Activated CD4-positive, alpha-beta memory T cell treated with anti-CD3 and anti-CD28 coated beads, Interleukin-2, amount 10 ng/mL, durations not matched to agents 7 days and 5 days (primary cell): ENCODE measurements at regions of chr15 and their contacts with region 1.

Region 1: DNA sequence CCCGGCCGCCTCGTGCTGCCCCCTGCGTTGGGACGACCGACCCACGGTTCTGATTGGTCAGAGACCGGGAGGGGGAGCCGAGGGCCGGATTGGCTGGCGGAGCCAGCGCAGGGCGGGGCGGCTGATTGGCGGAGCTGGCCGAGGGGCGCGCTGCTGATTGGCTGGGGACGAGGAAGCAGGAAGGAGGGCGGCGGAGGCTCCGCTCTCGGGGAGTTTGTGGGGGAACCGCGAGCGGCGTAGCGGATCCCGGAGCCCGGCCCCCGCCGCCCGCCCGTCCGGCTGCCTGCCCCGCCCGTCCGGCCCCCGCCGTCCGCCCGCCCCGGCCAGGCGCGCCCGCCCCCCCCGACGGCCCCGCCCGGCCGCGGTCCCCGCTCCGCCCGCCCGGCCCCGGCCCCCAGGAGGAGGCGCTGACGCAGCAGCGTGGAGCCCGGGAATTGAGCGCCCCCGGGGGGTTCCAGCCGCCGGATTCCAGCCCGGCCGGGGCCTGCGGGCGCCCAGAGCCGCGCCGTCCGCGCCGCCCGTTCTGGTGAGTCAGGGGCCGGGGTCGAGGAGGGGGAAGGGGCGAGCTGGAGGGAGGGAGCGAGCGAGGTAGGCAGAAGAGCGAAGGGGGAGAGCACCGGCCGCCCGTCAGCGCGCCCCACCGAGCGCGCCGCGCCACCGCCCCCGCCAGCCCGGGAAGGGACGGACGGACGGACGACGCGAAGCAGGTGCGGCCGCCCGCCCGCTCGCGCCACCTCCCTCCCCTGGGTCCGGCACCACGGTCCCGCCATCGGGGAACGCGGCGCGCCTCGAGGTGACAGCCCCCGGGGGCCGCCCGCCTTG is at the start of gene BAHD1:
- DNase-seq: peak; percentile 96
- H3K4me3 Mint-ChIP-seq: peak within 1 kb of the TSS; percentile 87
- H3K27ac Mint-ChIP-seq: peak within 1 kb of the TSS; percentile 49
- H3K4me1 Mint-ChIP-seq: peaks cover 45% of the 10 kb centered on the region
- H3K27me3 Mint-ChIP-seq: peaks cover 54% of the 10 kb centered on the region
- total RNA-seq, gene BAHD1: 26.0 to 27.0 TPM

Region 2: DNA sequence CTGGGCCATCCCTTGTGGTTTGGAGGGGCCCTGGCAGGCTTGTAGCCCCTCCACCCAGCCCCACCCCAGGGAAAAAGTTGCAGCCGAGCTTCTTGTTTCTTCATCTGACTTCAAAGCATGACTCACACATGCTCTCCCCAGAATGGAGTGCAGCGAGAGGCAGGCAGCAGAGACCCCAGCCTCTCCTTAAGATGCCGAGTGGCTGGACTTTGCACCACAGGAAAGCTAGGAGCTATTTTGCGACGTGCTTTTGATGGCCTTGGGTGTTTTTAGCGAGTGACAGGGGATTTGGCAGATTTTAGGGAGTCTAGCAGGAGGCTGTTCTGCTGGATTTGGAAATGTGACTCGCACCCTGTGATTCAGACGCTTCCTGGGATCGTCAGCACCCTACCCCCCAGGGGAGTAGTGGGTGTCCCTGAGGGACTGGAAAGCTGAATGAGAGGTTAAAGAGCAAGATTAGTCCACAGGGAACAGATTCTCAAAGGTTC is 14.0 kb after region 1 on chr15:
- CTCF ChIA-PET with region 1: interaction called, 16 read pairs
- POLR2A ChIA-PET with region 1: interaction called, 68 read pairs
- DNase-seq: no peak
- H3K4me3 Mint-ChIP-seq: no peak overlapping the region
- H3K27ac Mint-ChIP-seq: peak overlapping the region; percentile 85
- H3K4me1 Mint-ChIP-seq: peaks cover 56% of the 10 kb centered on the region
- H3K27me3 Mint-ChIP-seq: no peaks in the 10 kb centered on the region

Region 3: DNA sequence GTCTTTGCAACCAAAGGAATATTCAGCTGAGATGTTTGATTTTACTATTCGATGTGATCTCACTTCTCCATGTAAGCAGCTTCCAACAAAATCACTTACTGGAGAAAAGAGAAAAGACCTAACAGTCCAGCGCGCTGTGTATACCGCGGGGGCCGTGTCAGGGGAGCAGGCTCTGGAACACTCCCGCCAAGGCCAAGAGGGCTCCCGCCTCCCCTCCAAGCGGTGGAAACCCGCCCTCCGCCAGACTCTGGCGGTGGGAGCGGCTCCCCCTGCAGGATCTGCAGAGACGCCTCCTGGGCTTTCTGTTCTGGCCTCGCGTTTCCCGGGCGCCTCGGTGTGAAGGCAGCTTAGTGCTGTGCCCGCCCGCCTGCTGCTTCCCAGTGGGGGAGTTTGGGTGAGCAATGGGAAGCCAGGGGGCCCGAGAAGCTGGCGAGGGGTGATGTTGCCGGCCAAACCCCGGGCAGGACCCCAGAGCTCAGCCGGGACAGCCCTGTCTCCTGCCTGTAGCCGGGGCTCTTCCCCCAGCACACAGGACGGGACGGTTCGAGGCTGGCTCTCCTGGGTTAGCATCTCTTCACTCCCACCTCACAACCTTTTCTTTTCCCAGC is 66.1 kb after region 1 on chr15:
- CTCF ChIA-PET with region 1: interaction called, 11 read pairs
- POLR2A ChIA-PET with region 1: interaction called, 3 read pairs
- DNase-seq: peak; percentile 68
- H3K4me3 Mint-ChIP-seq: no peak overlapping the region
- H3K27ac Mint-ChIP-seq: no peak overlapping the region
- H3K4me1 Mint-ChIP-seq: peaks cover 27% of the 10 kb centered on the region
- H3K27me3 Mint-ChIP-seq: peaks cover 67% of the 10 kb centered on the region

Region 4: DNA sequence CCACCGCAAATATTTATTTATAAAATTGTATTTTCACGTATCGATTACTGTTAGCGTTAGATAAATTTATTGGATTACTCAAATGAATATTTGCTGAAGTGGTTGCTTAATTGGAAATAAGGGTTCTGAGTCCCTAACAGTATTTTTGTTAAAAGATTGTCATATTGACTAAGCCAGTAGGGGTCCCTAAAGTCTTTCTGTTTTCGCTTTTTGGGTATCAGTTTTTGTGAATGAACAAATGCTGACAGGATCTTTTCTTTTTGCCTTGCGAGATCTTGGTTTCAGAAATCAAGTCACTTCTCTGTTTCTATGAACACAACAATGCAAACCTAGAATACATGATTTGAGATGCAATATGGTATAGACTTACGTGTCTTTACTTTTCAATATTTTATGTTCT is 261.1 kb after region 1 on chr15:
- CTCF ChIA-PET with region 1: no interaction called
- POLR2A ChIA-PET with region 1: no interaction called
- DNase-seq: no peak
- H3K4me3 Mint-ChIP-seq: no peak overlapping the region
- H3K27ac Mint-ChIP-seq: no peak overlapping the region
- H3K4me1 Mint-ChIP-seq: peaks cover 34% of the 10 kb centered on the region
- H3K27me3 Mint-ChIP-seq: no peaks in the 10 kb centered on the region